Gastrocnemius medialis (tissue), 4 donors: ENCODE measurements at regions of chr17 and their contacts with region 1.

Region 1: DNA sequence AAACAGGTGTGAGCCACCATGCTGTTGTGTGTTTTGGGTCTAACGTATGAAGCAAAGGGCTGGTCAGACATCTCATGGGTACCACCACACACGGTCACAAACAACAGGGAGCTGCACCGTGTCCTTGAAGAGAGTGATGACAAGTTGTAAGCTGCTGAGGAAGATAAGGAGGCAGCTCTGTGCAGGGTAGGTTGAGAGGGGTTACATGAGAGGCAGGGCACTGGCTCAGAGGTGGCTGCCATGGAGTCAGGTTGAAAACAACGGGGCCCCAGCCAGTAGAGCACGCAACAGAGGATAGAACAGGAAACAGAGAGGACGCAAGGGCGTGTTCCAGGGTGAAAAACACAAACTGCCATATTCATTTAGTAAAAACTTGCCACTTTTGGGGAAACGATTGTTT is 52.2 kb downstream of the TRARG1 start:
- DNase-seq: no peak
- ATAC-seq: no peak
- H3K4me3 ChIP-seq: no peak overlapping the region
- H3K27ac ChIP-seq: no peak overlapping the region
- H3K4me1 ChIP-seq: no peaks in the 10 kb centered on the region
- H3K27me3 ChIP-seq: no peaks in the 10 kb centered on the region
- CTCF ChIP-seq: no peak
- POLR2A ChIP-seq: no peak

Region 2: DNA sequence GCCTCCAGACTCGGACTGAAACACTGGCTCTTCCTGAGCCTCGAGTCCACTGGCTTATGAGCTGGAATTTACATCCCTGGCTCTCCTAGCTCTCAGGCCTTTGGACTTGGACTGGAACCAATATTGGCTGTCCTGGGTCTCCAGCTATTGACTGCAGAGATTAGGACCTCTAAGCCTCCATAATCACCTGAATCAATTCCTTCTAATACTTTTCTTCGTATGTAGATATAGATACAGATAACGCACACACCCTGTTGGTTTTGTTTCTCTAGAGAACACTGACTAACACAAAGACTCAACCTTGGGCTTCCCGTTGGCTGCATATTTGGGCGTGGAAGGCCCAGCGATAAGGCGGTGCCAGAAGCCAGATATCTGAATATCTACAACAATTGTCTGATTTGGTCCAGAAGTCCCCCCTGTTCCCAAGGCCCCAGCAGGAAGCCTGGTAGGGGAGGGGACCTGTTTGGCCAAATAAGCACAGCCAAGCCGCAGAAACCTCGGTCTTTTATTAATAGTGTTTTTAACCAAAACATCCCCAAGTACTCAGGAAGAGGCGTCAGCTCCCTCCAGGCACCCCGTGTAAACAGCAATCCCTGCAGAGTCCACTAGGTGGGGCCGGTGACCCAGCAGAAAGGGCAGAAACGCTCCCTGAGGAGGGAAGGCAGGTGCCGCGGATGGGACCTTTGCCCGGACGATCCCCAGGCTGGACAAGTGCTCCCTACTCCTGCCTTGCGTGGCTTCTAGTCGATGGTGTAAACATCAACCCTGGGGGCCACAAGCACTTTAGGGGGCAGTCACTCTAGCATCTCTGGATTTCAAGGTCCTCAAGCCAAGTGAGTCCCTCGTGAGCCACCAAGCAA is 208.9 kb before region 1 on chr17:
- in situ Hi-C with region 1: no loop called
- intact Hi-C with region 1: loop called (anchors 2 kb)
- DNase-seq: peak; percentile 68 to 69
- ATAC-seq: peak; percentile 83 to 84
- H3K4me3 ChIP-seq: no peak overlapping the region
- H3K27ac ChIP-seq: peak overlapping the region; percentile 27 to 71 (median 62)
- H3K4me1 ChIP-seq: peaks cover 7 to 11% of the 10 kb centered on the region in 2 donors
- H3K27me3 ChIP-seq: peaks cover 0 to 9% (median 0%) of the 10 kb centered on the region in 3 donors
- CTCF ChIP-seq: peak; percentile 88 to 94 (median 92)
- POLR2A ChIP-seq: no peak

Region 3: DNA sequence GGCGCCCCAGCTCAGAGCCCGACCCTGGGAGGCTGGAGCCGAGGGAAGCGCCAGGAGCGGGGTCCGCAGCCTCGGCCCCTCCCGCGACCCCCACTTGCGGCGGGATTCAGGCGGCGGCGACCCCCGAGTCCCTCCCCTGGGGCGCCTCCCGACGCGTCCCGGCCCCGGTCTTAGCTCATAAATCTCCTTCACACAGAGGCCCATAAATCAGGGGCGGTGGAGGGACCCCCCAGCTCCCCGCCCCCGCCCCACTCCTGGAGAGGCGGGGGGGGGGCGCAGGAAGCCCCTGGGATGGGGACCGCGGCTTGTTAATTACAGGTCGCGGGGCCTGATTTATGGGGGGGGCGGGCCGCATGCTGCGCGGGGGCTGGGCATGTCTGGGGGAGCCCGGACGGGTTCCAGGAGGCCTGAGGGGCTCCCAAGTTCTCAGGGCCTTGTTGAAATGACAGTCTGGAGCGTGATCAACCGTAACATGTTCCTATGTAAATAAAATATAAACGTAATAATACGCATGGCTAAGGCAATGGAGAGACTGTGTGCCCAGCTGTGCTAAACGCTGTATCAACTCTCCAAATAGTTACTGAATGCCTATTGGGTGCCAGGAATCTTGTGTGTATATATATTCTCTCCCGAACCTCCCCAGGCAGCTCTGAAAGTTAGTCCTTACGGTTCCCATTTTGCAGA is 71.5 kb before region 1 on chr17:
- in situ Hi-C with region 1: loop called in 1 of 4 experiments (anchors 10 kb)
- intact Hi-C with region 1: loop called (anchors 1 kb)
- DNase-seq: no peak
- ATAC-seq: no peak
- H3K4me3 ChIP-seq: peak overlapping the region; percentile 50 to 76 (median 54)
- H3K27ac ChIP-seq: peak overlapping the region in 2 of 4 donors; percentile 56 to 66
- H3K4me1 ChIP-seq: peaks cover 0 to 11% of the 10 kb centered on the region in 2 donors
- H3K27me3 ChIP-seq: peaks cover 0 to 27% (median 14%) of the 10 kb centered on the region in 3 donors
- CTCF ChIP-seq: no peak
- POLR2A ChIP-seq: no peak

Region 4: GRCh38 chr17:1267471-1267947 is 64.2 kb before region 1 on chr17:
- in situ Hi-C with region 1: loop called in 2 of 4 experiments (anchors 10 kb)
- intact Hi-C with region 1: no loop called
- DNase-seq: peak; percentile 14 to 42
- ATAC-seq: peak; percentile 29 to 58
- H3K4me3 ChIP-seq: peak overlapping the region; percentile 66 to 82 (median 81)
- H3K27ac ChIP-seq: peak overlapping the region; percentile 82 to 85 (median 84)
- H3K4me1 ChIP-seq: peaks cover 0 to 6% of the 10 kb centered on the region in 2 donors
- H3K27me3 ChIP-seq: peaks cover 12 to 20% (median 16%) of the 10 kb centered on the region in 3 donors
- CTCF ChIP-seq: no peak
- POLR2A ChIP-seq: no peak

Region 5: GRCh38 chr17:1275962-1276736 is 55.6 kb before region 1 on chr17:
- in situ Hi-C with region 1: loop called in 1 of 4 experiments (anchors 10 kb)
- intact Hi-C with region 1: loop called (anchors 5 kb)
- DNase-seq: peak in 1 of 2 donors; percentile 46
- ATAC-seq: peak; percentile 71 to 77
- H3K4me3 ChIP-seq: no peak overlapping the region
- H3K27ac ChIP-seq: no peak overlapping the region
- H3K4me1 ChIP-seq: no peaks in the 10 kb centered on the region
- H3K27me3 ChIP-seq: peaks cover 5 to 12% (median 8%) of the 10 kb centered on the region in 3 donors
- CTCF ChIP-seq: peak; percentile 62 to 91 (median 80)
- POLR2A ChIP-seq: no peak

Region 6: DNA sequence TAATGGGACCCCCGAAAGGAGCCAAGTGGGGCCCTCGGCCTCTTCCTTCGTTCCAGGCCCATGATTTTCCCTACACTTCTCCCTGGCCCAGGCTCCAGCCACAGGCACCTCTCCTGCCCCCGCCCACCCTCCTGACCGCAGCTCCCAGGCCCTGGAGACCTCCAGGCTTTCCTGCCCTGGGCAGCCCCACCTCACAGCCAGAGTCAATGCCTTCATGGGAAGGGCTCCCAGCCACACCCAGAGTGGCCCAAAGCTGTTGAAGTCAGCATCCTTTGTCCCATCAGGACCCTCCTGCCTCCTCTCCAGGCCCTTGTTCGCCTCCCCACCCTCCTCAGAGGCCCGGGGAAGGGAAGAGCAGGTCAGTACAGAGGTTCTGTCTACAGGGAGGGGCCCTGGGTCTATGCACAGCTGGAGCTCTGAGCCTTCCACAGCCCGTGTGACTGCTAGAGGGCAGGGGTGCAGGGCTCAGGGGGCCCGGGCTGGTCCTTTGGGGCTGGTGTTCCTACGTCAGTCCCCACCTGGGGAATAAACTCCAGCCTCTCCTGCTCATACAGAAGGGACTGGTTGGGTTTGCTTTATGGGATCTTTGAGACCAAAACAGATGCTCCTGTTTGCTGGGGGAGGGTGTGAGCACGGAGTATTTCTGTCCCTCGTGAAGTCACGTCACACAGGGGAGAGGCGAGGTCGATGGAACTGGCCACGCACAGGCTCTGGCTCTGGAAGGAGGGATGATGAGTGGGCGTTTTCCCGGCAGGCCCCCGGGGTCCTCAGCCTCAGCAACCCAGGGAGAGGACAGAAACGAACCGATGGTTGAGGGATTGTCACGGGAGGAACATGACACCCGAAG is 32.0 kb before region 1 on chr17:
- in situ Hi-C with region 1: no loop called
- intact Hi-C with region 1: no loop called
- DNase-seq: peak; percentile 21 to 28
- ATAC-seq: peak; percentile 47 to 66
- H3K4me3 ChIP-seq: no peak overlapping the region
- H3K27ac ChIP-seq: peak overlapping the region in 3 of 4 donors; percentile 48 to 67 (median 52)
- H3K4me1 ChIP-seq: no peaks in the 10 kb centered on the region
- H3K27me3 ChIP-seq: peaks cover 14 to 31% (median 25%) of the 10 kb centered on the region in 3 donors
- CTCF ChIP-seq: no peak
- POLR2A ChIP-seq: no peak